ENCODE measurements at regions of chr4 and their contacts with region 1.

Region 1: GRCh38 chr4:81405894-81406401 is 65.8 kb downstream of the RASGEF1B start:
- DNase-seq: peak; percentile 52
- H3K4me3 Mint-ChIP-seq: no peak overlapping the region
- H3K27ac Mint-ChIP-seq: no peak overlapping the region
- H3K4me1 Mint-ChIP-seq: peaks cover 3% of the 10 kb centered on the region
- H3K27me3 Mint-ChIP-seq: no peaks in the 10 kb centered on the region

Region 2: DNA sequence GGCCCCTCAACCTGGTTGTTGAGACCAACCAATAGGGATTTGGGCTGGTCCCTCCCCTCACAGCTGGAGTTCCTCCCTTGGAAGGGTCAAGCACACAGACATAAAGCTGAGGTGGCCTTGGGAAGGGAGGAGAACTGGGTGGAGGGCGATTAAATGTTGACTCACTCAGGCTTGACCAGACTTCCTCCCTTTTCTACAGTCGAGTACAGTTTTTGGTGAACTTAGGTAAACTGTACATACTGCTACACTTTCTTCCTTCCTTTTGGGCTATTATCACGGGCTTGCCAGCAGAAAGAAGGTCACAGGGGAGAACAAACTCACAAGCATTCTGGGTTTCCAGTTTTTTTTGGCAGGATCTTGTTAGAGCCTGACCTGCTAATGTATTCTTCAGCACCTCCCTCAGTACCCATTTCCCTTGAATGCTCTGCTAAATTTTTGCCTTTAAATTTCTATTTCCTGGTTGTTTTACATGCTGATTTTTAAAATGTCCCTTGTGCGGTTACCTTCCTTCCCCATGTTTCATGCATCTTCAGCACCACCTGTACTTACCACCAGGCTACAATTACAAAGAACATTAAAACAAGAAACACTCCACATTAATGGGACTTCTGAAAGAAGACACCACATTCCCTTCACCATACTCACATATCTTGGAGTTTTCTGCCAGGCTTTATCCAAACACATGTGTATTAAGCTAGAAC is 201.0 kb after region 1 on chr4:
- CTCF ChIA-PET with region 1: no interaction called
- intact Hi-C with region 1: loop called (anchors 10 kb)
- DNase-seq: no peak
- H3K4me3 Mint-ChIP-seq: no peak overlapping the region
- H3K27ac Mint-ChIP-seq: no peak overlapping the region
- H3K4me1 Mint-ChIP-seq: peaks cover 8% of the 10 kb centered on the region
- H3K27me3 Mint-ChIP-seq: no peaks in the 10 kb centered on the region

Region 3: DNA sequence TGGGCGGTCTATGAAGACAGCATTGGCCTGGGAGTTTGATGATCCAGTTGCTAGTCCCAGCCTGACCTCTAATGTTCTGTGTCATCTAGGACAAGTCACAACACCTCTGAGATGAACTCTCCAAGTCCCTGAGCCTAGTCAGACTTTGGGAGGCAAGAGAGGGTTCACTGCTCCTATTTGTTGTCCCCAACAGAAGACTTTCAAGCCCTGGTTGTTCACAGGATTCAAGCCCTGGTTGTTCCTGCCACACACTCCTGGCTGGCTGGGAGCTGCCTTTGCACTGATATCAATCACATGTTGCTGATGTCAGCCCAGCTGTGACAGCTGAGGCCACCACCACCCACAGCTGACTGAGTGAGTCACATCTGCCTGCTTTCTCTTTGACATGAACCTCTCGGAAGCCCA is 319.0 kb after region 1 on chr4:
- CTCF ChIA-PET with region 1: no interaction called
- intact Hi-C with region 1: loop called (anchors 1 kb)
- DNase-seq: peak; percentile 78
- H3K4me3 Mint-ChIP-seq: no peak overlapping the region
- H3K27ac Mint-ChIP-seq: no peak overlapping the region
- H3K4me1 Mint-ChIP-seq: peaks cover 14% of the 10 kb centered on the region
- H3K27me3 Mint-ChIP-seq: no peaks in the 10 kb centered on the region

Region 4: DNA sequence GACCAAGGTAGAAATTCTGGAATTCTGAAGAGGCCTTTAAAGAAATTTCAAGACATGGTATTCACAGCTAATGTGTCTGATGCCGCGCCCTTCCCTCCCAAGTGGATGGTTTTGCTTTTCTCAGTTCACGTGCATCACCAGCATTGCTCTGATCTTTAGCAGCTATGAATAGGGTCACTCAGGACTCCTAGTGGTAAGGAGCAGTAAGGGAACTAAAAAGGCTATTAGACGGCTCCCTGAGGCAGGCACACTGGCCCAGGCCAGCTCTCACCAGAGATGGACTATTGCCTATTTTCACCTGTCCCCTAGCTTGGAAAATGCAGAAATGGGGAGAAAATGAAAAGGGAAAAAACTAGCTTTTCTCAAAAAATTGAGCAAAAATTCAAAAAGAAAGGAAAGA is 513.3 kb after region 1 on chr4:
- CTCF ChIA-PET with region 1: interaction called, 3 read pairs
- intact Hi-C with region 1: loop called (anchors 1 kb)
- DNase-seq: no peak
- H3K4me3 Mint-ChIP-seq: no peak overlapping the region
- H3K27ac Mint-ChIP-seq: no peak overlapping the region
- H3K4me1 Mint-ChIP-seq: peaks cover 6% of the 10 kb centered on the region
- H3K27me3 Mint-ChIP-seq: peaks cover 11% of the 10 kb centered on the region

Region 5: GRCh38 chr4:82739316-82740179 is 1333.6 kb after region 1 on chr4:
- CTCF ChIA-PET with region 1: interaction called, 4 read pairs
- intact Hi-C with region 1: loop called (anchors 5 kb)
- DNase-seq: peak; percentile 85
- H3K4me3 Mint-ChIP-seq: no peak overlapping the region
- H3K27ac Mint-ChIP-seq: no peak overlapping the region
- H3K4me1 Mint-ChIP-seq: no peaks in the 10 kb centered on the region
- H3K27me3 Mint-ChIP-seq: no peaks in the 10 kb centered on the region

Region 6: DNA sequence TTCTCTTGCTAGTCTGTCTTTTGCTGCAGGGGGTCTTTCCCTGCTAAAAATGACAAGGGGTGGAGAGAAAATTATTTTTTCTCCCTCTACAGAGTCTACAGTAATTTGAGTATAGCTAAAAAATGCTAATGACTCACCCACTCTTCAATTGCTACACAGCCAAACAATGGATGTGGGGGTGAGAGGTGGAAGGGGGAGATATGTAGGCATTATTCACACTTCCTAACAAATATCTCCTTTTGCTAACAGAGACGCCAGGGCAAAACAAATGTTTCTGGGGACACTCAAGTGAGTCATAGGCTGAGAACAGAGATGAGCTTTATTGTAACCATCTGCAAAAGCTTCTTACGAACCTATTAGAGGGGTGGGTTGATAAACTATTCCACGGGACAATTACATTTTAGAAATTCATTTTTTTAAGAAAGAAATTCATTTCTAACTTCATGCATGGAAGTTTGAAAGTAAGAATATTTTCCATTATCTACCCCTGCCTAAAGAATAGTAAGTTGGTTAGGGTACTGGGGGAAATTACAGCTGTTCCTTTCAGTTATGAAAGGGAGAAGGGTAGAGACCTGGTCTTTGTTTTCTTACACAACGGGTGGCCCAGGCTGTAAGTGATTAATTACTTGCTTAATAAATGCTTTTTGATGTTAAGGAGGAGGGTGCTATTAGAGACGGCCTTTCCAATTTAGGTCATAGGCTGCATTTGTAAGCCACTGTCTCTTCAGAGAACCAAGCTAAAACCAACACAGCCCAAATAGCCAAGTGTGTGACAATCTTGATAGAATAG is 1379.9 kb after region 1 on chr4:
- CTCF ChIA-PET with region 1: no interaction called
- intact Hi-C with region 1: no loop called
- DNase-seq: no peak
- H3K4me3 Mint-ChIP-seq: no peak overlapping the region
- H3K27ac Mint-ChIP-seq: no peak overlapping the region
- H3K4me1 Mint-ChIP-seq: no peaks in the 10 kb centered on the region
- H3K27me3 Mint-ChIP-seq: peaks cover 6% of the 10 kb centered on the region